Natural killer cell (primary cell): ENCODE measurements at regions of chr6 and their contacts with region 1.

Region 1: GRCh38 chr6:44655412-44656342 is 268.2 kb downstream of the CDC5L start:
- DNase-seq: peak; percentile 62 to 81
- ATAC-seq: peak; percentile 57 to 80 (median 64)
- H3K4me3 ChIP-seq: no peak overlapping the region
- H3K4me3 Mint-ChIP-seq: peak overlapping the region; percentile 11
- H3K27ac ChIP-seq: no peak overlapping the region
- H3K27ac Mint-ChIP-seq: no peak overlapping the region
- H3K4me1 ChIP-seq: peaks cover 7% of the 10 kb centered on the region
- H3K4me1 Mint-ChIP-seq: peaks cover 5 to 6% of the 10 kb centered on the region in 2 donors
- H3K27me3 ChIP-seq: no peaks in the 10 kb centered on the region
- H3K27me3 Mint-ChIP-seq: peaks cover 17 to 22% of the 10 kb centered on the region in 2 donors
- CTCF ChIP-seq: peak; percentile 86

Region 2: DNA sequence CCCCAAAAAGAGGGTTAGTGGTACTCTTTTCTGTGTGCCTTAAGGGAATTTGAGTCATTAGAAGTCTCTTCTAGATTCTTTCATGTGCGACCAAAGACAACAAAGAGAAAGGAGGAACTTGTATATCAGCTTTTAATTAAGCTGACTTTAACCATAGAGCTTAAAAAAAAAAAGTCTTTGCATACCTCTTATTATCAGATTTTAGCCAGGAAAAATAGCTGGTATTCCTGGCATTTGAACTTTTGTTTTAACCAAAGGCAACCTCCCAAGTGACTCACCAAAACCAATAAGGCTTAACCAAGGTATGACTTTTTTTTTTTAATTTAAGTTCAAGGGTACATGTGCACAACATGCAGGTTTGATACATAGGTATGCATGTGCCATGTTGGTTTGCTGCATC is 106.8 kb after region 1 on chr6:
- intact Hi-C with region 1: no loop called
- DNase-seq: no peak
- ATAC-seq: no peak
- H3K4me3 ChIP-seq: no peak overlapping the region
- H3K4me3 Mint-ChIP-seq: no peak overlapping the region
- H3K27ac ChIP-seq: no peak overlapping the region
- H3K27ac Mint-ChIP-seq: no peak overlapping the region
- H3K4me1 ChIP-seq: no peaks in the 10 kb centered on the region
- H3K4me1 Mint-ChIP-seq: no peaks in the 10 kb centered on the region
- H3K27me3 ChIP-seq: no peaks in the 10 kb centered on the region
- H3K27me3 Mint-ChIP-seq: peaks cover 4 to 6% of the 10 kb centered on the region in 2 donors
- CTCF ChIP-seq: no peak

Region 3: DNA sequence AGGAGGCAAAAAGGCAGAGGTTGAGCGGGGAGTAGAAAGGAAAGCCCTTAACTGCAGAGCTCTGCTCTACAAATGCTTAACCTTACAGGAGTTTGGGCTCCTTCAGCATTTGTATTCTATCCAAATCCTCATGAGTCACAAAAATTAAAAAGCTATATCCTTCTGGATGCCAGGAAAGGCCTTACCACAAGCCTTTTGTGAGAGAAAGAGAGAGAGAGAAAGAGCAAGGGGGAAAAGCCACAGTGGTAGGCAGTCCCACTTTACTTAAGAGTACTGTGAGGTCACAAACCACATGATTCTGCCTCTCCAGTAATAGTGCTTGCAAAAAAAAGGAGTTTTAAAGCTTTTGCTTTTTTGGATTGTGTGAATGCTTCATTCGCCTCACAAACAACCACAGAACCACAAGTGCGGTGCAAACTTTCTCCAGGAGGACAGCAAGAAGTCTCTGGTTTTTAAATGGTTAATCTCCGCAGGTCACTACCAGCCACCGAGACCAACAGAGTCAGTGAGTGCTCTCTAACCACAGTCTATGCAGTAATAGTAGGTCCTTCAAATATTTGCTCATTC is 672.4 kb after region 1 on chr6 and contains the start of gene RUNX2:
- intact Hi-C with region 1: loop called (anchors 10 kb)
- DNase-seq: peak in 1 of 2 donors; percentile 49
- ATAC-seq: peak; percentile 30 to 65 (median 58)
- H3K4me3 ChIP-seq: peak within 1 kb of the TSS; percentile 5
- H3K4me3 Mint-ChIP-seq: peak within 1 kb of the TSS; percentile 77
- H3K27ac ChIP-seq: peak within 1 kb of the TSS; percentile 18
- H3K27ac Mint-ChIP-seq: peak within 1 kb of the TSS; percentile 34 to 72
- H3K4me1 ChIP-seq: no peaks in the 10 kb centered on the region
- H3K4me1 Mint-ChIP-seq: peaks cover 29 to 37% of the 10 kb centered on the region in 2 donors
- H3K27me3 ChIP-seq: no peaks in the 10 kb centered on the region
- H3K27me3 Mint-ChIP-seq: no peaks in the 10 kb centered on the region
- CTCF ChIP-seq: no peak
- total RNA-seq, gene RUNX2: 5.0 to 19.2 (median 7.0) TPM

Region 4: DNA sequence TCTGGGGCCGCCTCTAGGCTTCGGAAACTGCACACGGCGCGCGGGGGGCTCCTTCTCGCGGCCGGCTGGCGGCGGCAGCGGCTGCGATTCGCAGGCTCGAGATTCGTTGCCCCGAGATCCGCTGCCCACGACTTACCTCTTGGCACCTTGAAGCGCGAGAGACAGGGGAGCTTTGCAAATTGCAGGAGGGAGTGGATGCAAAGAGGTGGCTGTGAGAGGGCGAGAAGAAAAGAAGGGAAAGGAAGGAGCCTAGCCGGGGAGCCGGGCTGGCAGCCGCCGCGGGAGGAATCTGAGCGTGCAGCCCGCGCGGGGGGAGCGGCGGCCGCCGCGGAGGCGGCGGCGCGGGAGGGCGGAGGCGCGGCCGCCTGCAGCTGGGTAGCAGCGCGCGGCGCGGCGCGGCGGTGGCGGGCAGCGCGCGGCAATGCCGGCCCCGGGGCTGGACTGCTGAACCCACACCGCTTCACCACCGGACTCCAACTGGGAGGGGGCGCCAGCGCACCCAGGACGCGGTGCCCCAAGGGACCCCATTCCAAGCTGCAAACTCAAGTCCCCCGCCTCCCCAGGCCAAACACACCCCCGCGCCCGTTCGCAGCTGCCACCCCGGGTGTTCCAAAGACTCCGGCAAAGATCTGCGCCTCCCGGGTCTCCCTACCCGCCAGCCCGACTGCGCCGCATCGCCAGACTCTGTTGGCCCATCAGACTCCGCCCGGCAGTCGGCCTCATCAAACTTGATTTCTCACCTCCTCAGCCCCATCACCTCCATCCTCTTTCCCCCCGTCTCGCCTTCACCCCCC is 766.2 kb after region 1 on chr6:
- intact Hi-C with region 1: loop called (anchors 5 kb)
- DNase-seq: peak; percentile 42 to 72
- ATAC-seq: peak; percentile 43 to 53 (median 51)
- H3K4me3 ChIP-seq: peak overlapping the region; percentile 94
- H3K4me3 Mint-ChIP-seq: peak overlapping the region; percentile 95
- H3K27ac ChIP-seq: peak overlapping the region; percentile 50
- H3K27ac Mint-ChIP-seq: peak overlapping the region; percentile 66 to 87
- H3K4me1 ChIP-seq: peaks cover 46% of the 10 kb centered on the region
- H3K4me1 Mint-ChIP-seq: peaks cover 21 to 56% of the 10 kb centered on the region in 2 donors
- H3K27me3 ChIP-seq: peaks cover 13% of the 10 kb centered on the region
- H3K27me3 Mint-ChIP-seq: peaks cover 40 to 42% of the 10 kb centered on the region in 2 donors
- CTCF ChIP-seq: no peak

Region 5: GRCh38 chr6:45714741-45715507 is 1059.2 kb after region 1 on chr6:
- intact Hi-C with region 1: loop called (anchors 1 kb)
- DNase-seq: peak in 1 of 2 donors; percentile 85
- ATAC-seq: peak; percentile 72 to 85 (median 82)
- H3K4me3 ChIP-seq: no peak overlapping the region
- H3K4me3 Mint-ChIP-seq: no peak overlapping the region
- H3K27ac ChIP-seq: no peak overlapping the region
- H3K27ac Mint-ChIP-seq: no peak overlapping the region
- H3K4me1 ChIP-seq: peaks cover 14% of the 10 kb centered on the region
- H3K4me1 Mint-ChIP-seq: peaks cover 0 to 19% of the 10 kb centered on the region in 2 donors
- H3K27me3 ChIP-seq: no peaks in the 10 kb centered on the region
- H3K27me3 Mint-ChIP-seq: peaks cover 7 to 20% of the 10 kb centered on the region in 2 donors
- CTCF ChIP-seq: peak; percentile 69

Region 6: DNA sequence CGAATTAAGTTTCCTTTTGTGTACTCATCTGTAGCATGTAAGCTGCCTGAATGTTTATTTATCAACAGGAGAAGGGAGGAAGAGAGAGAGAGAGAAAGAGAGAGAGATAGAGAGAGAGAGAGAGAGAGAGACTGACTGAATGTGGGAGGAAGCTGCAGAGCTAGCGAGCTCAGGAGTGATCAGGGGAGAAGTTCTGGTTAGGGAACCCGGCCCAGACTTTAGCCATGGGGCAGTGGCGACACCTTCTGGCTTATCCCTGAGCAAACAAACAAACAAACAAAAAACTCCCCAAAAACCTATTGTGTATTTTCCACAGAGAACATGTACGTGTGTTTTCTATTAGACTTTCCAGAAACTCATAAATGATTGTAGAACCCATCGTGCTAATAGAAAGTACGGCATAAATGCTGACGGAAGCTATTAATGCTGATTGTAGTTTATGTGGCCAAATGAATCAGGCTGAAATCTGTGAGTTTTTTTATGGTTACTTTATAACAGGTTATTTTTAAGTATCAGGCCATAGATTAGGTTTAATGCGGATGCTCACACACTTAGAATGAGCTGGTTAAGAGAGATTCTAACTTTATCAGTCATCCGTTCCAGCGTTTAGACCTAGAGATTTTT is 1267.2 kb after region 1 on chr6:
- intact Hi-C with region 1: loop called (anchors 1 kb)
- DNase-seq: peak; percentile 42 to 70
- ATAC-seq: peak; percentile 50 to 73 (median 69)
- H3K4me3 ChIP-seq: no peak overlapping the region
- H3K4me3 Mint-ChIP-seq: no peak overlapping the region
- H3K27ac ChIP-seq: no peak overlapping the region
- H3K27ac Mint-ChIP-seq: no peak overlapping the region
- H3K4me1 ChIP-seq: no peaks in the 10 kb centered on the region
- H3K4me1 Mint-ChIP-seq: peaks cover 6 to 10% of the 10 kb centered on the region in 2 donors
- H3K27me3 ChIP-seq: no peaks in the 10 kb centered on the region
- H3K27me3 Mint-ChIP-seq: peaks cover 0 to 5% of the 10 kb centered on the region in 2 donors
- CTCF ChIP-seq: peak; percentile 67